Activated B cell treated with CpG ODN at 0.5 μM for 24 hours (primary cell): ENCODE measurements at regions of chr16 and their contacts with region 1.

Region 1: DNA sequence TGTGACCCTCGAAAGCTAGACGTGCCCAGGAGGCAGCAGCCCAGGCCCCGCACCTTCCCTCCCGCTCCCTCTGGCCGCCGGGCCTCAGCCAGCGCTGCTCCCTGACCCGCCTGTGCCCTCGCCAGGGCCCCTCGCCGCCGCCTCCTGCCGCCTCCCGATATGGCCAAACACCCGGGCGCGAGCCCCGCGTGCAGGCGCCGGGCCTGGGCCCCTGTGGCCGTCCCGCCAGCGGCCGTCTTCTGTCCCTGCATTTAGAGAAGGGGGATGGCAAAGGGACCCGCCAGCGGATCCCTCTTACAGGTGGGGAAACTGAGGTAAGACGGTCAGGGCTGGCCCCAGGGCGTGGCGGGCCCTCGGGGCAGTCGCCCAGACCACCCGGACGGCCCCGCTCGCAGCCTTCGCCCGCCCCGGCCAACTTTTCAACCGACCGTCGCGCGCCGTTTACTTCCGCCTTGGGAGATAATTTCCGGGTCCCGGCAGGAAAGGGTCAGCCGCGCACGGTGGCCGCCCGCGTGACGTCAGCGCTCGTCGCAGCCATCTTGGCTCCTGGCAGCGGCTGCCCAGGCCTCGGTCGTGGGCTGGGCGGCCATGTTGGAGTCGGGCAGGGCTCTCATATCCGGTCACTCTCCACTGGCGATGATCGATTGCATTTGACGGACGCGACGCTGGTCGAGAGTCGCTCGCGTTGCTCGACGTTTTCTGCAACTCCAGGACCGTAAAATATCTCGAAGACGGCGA is 7.0 kb upstream of the GNG13 start:
- DNase-seq: peak; percentile 79
- ATAC-seq: peak; percentile 95
- H3K4me3 Mint-ChIP-seq: peak overlapping the region; percentile 97
- H3K27ac Mint-ChIP-seq: peak overlapping the region; percentile 92
- H3K4me1 Mint-ChIP-seq: peaks cover 11% of the 10 kb centered on the region
- H3K27me3 Mint-ChIP-seq: peaks cover 11% of the 10 kb centered on the region
- CTCF ChIP-seq: no peak

Region 2: GRCh38 chr16:589658-590159 is 217.8 kb before region 1 on chr16 and contains the start of gene RAB40C:
- CTCF ChIA-PET with region 1: no interaction called
- POLR2A ChIA-PET with region 1: no interaction called
- intact Hi-C with region 1: loop called (anchors 1 kb)
- DNase-seq: peak; percentile 96
- ATAC-seq: peak; percentile 86
- H3K4me3 Mint-ChIP-seq: peak within 1 kb of the TSS; percentile 99
- H3K27ac Mint-ChIP-seq: peak within 1 kb of the TSS; percentile 100
- H3K4me1 Mint-ChIP-seq: peaks cover 42% of the 10 kb centered on the region
- H3K27me3 Mint-ChIP-seq: no peaks in the 10 kb centered on the region
- CTCF ChIP-seq: no peak
- total RNA-seq, gene RAB40C: 10.5 and 13.1 TPM in 2 replicates

Region 3: GRCh38 chr16:720990-721764 is 86.3 kb before region 1 on chr16 and contains the start of gene ANTKMT:
- CTCF ChIA-PET with region 1: no interaction called
- POLR2A ChIA-PET with region 1: interaction called, 6 read pairs
- intact Hi-C with region 1: loop called (anchors 5 kb)
- DNase-seq: peak; percentile 89
- ATAC-seq: peak; percentile 90
- H3K4me3 Mint-ChIP-seq: peak within 1 kb of the TSS; percentile 80
- H3K27ac Mint-ChIP-seq: peak within 1 kb of the TSS; percentile 73
- H3K4me1 Mint-ChIP-seq: peaks cover 19% of the 10 kb centered on the region
- H3K27me3 Mint-ChIP-seq: peaks cover 3% of the 10 kb centered on the region
- CTCF ChIP-seq: no peak
- total RNA-seq, gene ANTKMT: 58.0 and 67.4 TPM in 2 replicates

Region 4: GRCh38 chr16:788394-789126 is 19.0 kb before region 1 on chr16 and contains the start of gene CHTF18:
- CTCF ChIA-PET with region 1: no interaction called
- POLR2A ChIA-PET with region 1: interaction called, 5 read pairs
- intact Hi-C with region 1: loop called (anchors 1 kb)
- DNase-seq: peak; percentile 94
- ATAC-seq: peak; percentile 97
- H3K4me3 Mint-ChIP-seq: peak within 1 kb of the TSS; percentile 86
- H3K27ac Mint-ChIP-seq: peak within 1 kb of the TSS; percentile 56
- H3K4me1 Mint-ChIP-seq: peaks cover 7% of the 10 kb centered on the region
- H3K27me3 Mint-ChIP-seq: no peaks in the 10 kb centered on the region
- CTCF ChIP-seq: no peak
- total RNA-seq, gene CHTF18: 42.4 and 45.5 TPM in 2 replicates

Region 5: GRCh38 chr16:970766-971581 is 163.5 kb after region 1 on chr16 and contains the start of gene LMF1:
- CTCF ChIA-PET with region 1: no interaction called
- POLR2A ChIA-PET with region 1: no interaction called
- intact Hi-C with region 1: loop called (anchors 2 kb)
- DNase-seq: peak; percentile 100
- ATAC-seq: peak; percentile 99
- H3K4me3 Mint-ChIP-seq: peak within 1 kb of the TSS; percentile 85
- H3K27ac Mint-ChIP-seq: peak within 1 kb of the TSS; percentile 65
- H3K4me1 Mint-ChIP-seq: peaks cover 19% of the 10 kb centered on the region
- H3K27me3 Mint-ChIP-seq: peaks cover 8% of the 10 kb centered on the region
- CTCF ChIP-seq: no peak
- total RNA-seq, gene LMF1: 30.7 and 36.1 TPM in 2 replicates

Region 6: DNA sequence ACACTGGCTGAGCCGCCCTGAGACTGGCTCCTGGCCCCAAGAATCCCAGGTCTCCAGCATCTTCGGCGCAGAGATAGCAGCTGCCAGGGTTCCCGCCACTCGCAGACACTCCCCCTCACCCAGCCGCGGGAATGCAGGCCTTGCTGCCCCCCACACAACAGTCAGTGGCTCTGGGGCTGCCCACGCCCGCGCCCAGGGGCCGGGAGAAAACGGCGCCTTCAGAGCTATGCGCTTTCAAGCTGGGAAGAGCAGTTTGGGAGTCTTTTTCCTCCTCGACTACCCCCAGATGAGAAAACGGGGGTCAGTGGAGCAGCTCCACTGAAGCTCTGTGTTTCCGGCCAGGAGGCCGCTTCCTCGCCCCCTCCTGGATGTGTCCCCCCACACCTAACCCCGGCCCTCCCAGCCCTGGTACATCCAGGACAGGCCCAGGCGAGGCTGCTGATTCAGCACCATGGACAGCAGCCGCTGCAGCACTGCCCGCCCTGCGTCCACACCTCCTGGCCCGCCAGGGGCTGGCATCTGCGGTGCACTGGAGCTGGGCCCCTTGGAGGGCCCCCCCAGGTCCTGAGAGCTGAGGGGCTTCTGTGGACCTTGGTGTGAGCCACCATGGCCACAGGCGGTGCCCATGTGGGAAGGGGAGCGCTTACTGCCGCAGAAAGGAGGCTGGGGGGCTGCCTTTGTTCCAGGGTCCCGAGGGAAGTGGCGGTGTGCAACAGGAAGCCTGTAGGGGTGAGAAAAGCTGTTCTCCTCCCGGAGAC is 381.1 kb after region 1 on chr16:
- CTCF ChIA-PET with region 1: no interaction called
- POLR2A ChIA-PET with region 1: no interaction called
- intact Hi-C with region 1: no loop called
- DNase-seq: peak; percentile 46
- ATAC-seq: peak; percentile 57
- H3K4me3 Mint-ChIP-seq: no peak overlapping the region
- H3K27ac Mint-ChIP-seq: no peak overlapping the region
- H3K4me1 Mint-ChIP-seq: no peaks in the 10 kb centered on the region
- H3K27me3 Mint-ChIP-seq: peaks cover 3% of the 10 kb centered on the region
- CTCF ChIP-seq: no peak